ENCODE measurements at regions of chr13 and their contacts with region 1.

Region 1: DNA sequence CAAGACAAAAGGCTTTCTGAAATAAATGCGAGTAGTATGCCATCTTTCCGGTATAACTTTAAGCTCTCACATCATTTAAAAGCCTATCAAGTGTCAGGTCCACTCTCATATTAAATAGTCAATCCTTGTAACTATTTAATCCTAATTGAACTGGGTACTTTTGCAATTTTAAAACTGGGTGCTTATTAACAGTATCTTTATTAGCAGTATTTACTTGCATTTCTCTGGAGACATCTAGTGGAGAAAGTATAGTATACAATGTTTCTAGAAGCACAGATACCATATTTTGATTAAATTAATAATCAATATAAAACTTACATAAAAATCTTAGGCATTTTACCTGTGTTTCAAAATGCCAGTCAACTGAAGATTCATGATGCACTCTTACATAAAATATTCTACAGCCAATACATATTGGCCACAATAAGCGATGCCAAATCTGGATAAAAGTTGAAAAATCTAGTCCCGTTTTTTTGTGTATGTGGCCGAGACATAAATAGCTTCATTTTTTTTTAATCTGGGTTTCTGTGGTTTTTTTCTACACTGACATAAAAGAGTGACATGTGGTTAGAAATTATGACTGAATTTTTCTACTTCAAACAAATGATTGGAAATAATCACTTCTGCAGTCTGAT is 4.3 kb upstream of the POSTN start:
- DNase-seq: no peak
- H3K4me3 ChIP-seq: no peak overlapping the region
- H3K27ac ChIP-seq: no peak overlapping the region
- H3K4me1 ChIP-seq: no peaks in the 10 kb centered on the region
- H3K27me3 ChIP-seq: no peaks in the 10 kb centered on the region
- CTCF ChIP-seq: peak in 5 of 6 experiments; percentile 13 to 58 (median 31)
- POLR2A ChIP-seq: no peak

Region 2: DNA sequence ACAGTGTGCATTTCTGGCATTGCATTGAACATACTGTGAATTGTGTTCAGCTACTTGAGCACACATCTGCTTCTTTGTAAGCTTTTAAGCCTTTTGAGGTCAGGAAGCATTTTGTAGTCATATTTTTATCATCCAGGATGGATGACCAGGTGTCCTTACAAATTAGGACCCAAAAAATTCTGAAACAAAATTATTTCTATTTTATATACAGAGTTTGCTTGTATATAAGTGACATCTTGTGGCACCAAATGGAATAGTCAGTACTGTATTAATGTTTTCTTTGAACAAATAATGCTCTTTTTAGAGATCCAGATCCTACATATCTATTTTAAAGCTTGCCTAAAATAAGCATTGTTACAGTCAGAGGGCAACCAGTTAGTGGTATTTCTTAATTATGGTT is 533.9 kb before region 1 on chr13:
- intact Hi-C with region 1: loop called in 1 of 2 experiments (anchors 10 kb)
- DNase-seq: no peak
- H3K4me3 ChIP-seq: no peak overlapping the region
- H3K27ac ChIP-seq: no peak overlapping the region
- H3K4me1 ChIP-seq: no peaks in the 10 kb centered on the region
- H3K27me3 ChIP-seq: no peaks in the 10 kb centered on the region
- CTCF ChIP-seq: peak in 5 of 6 experiments; percentile 11 to 40 (median 32)
- POLR2A ChIP-seq: no peak

Region 3: DNA sequence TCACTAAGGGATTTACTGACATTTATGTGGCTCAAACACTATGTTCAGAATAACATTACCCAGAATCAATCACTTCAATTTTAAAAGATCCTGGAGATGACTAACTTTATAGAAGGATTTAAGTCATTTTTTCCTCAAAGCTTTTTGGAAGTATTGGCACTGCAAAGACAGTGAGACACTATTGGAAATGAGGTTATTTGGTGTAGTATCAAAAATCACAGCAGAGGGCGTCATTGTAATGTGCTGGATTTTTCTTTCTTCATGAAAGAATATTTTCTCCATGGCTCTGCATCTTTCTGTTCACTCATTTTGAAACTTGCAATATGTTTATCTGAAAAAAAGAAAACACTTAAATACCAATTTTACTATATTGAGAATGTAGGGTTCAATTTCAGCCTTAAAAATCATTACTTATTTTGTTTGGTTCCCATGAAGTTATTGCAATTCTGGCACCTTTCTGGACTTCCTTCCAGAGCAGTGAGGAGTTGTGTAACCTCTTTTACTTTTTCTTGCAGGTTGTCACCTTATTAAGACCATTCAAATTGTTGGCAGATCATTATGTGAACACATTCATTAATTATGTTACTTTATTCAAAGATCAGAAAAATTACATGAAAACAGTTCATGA is 493.7 kb before region 1 on chr13:
- intact Hi-C with region 1: loop called in 1 of 2 experiments (anchors 10 kb)
- DNase-seq: no peak
- H3K4me3 ChIP-seq: no peak overlapping the region
- H3K27ac ChIP-seq: no peak overlapping the region
- H3K4me1 ChIP-seq: no peaks in the 10 kb centered on the region
- H3K27me3 ChIP-seq: no peaks in the 10 kb centered on the region
- CTCF ChIP-seq: peak in 5 of 6 experiments; percentile 19 to 60 (median 37)
- POLR2A ChIP-seq: no peak

Region 4: GRCh38 chr13:37681300-37682032 is 78.6 kb after region 1 on chr13:
- intact Hi-C with region 1: no loop called
- DNase-seq: no peak
- H3K4me3 ChIP-seq: no peak overlapping the region
- H3K27ac ChIP-seq: peak overlapping the region in 1 of 5 donors; percentile 55
- H3K4me1 ChIP-seq: no peaks in the 10 kb centered on the region
- H3K27me3 ChIP-seq: no peaks in the 10 kb centered on the region
- CTCF ChIP-seq: no peak
- POLR2A ChIP-seq: no peak

Region 5: GRCh38 chr13:38008636-38009035 is 405.8 kb after region 1 on chr13:
- intact Hi-C with region 1: no loop called
- DNase-seq: peak in 1 of 7 donors; percentile 7
- H3K4me3 ChIP-seq: no peak overlapping the region
- H3K27ac ChIP-seq: no peak overlapping the region
- H3K4me1 ChIP-seq: no peaks in the 10 kb centered on the region
- H3K27me3 ChIP-seq: no peaks in the 10 kb centered on the region
- CTCF ChIP-seq: no peak
- POLR2A ChIP-seq: no peak